ENCODE measurements at regions of chr17 and their contacts with region 1.

Region 1: DNA sequence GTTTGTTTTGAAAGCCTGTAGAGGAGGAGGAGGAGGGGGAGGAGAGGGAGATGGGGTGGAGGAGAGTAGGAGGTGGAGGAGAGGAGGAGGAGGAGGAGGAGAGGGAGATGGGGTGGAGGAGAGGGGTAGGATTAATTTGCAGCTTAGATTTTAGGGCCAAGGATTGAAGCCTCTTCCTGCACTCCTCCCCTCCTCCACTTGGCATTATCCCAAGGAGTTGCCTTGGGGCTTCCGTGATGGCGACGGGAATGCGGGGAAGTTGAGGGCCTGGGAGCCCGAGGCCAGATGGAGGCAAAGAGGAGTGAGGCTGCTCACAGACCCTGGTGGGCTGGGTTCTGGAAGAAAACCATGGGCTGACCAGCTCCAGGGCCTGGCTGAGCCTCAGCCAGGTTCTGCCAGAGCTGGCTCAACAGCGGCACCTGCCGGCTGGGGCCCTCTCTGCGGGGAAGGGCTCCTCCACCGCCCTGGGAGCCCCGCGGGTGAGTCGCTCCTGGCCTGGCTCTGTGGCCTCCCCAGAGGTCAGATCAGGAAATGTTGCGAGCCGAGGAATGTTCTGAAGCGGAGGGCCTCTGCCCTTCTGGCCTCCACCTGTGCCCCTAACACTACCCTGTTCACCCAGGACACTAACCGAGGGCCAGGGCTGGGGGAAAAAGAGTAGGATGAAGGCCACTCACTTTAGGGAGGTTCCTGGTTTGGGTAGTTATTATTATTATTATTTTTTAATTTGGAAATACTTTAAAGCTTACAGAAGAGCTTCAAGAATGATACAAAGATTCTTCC is 23.9 kb upstream of the FMNL1 start:
- DNase-seq: peak; percentile 81
- ATAC-seq: peak; percentile 96
- H3K4me3 ChIP-seq: no peak overlapping the region
- H3K27ac ChIP-seq: peak overlapping the region; percentile 53
- H3K4me1 ChIP-seq: peaks cover 12 to 31% of the 10 kb centered on the region in 2 experiments; a peak in 3 of 4 replicates
- H3K27me3 ChIP-seq: no peaks in the 10 kb centered on the region
- CTCF ChIP-seq: peak; percentile 98 to 99 (median 99)
- POLR2A ChIP-seq: no peak
- RAD21 ChIP-seq: peak; percentile 100

Region 2: DNA sequence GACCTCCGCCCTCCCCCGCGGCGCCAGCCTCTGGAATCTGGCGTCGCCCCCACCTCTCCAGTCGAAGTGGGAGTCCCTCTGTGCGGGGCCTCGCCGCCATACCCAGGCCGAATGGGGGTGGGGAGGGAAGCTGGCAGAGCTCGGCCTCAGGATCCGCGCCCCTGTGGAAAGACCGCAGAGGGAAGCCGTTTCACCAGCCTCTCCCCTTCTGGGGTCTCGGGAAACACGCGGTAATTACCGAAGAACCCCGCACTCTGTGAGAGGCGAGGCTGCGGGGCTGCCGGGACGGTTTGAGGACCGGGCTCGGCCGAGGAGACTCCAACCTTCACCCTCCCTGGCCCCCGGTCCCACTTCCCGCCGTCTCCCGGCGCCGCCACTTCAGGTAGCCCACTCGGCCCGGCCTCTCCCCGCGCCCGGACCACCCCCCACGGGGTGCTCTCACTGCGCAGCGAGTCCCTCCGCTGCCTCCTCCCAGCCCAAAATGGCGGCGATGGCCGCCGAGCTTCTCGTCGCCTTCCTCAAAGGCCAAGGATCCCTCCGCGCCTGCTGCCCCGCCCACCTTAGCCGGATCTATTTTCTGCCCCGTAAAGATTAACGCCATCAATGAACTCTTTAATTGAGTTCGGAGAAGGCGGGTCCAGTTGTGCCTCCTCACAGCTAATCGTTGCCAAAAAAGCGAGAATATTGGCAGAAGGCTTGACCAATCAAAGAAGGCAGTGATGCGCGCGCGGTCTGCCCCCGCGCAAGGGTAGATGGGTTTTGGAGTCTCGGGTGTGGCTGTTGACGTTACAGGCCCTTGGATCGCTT is 36.5 kb before region 1 on chr17:
- CTCF ChIA-PET with region 1: interaction called, 129 read pairs
- POLR2A ChIA-PET with region 1: interaction called, 14 read pairs
- RAD21 ChIA-PET with region 1: interaction called, 6 to 8 read pairs
- intact Hi-C with region 1: no loop called
- DNase-seq: peak; percentile 100
- ATAC-seq: peak; percentile 93
- H3K4me3 ChIP-seq: peak overlapping the region; percentile 89 to 97
- H3K27ac ChIP-seq: peak overlapping the region; percentile 89
- H3K4me1 ChIP-seq: peaks cover 23 to 35% of the 10 kb centered on the region in 2 experiments
- H3K27me3 ChIP-seq: no peaks in the 10 kb centered on the region
- CTCF ChIP-seq: 0 out of 6 replicates have a peak, but pooled peaks of 1 of the 3 experiments have one; percentile 9
- POLR2A ChIP-seq: peak; percentile 52
- RAD21 ChIP-seq: 0 out of 2 replicates have a peak, but pooled peaks have one; percentile 15

Region 3: DNA sequence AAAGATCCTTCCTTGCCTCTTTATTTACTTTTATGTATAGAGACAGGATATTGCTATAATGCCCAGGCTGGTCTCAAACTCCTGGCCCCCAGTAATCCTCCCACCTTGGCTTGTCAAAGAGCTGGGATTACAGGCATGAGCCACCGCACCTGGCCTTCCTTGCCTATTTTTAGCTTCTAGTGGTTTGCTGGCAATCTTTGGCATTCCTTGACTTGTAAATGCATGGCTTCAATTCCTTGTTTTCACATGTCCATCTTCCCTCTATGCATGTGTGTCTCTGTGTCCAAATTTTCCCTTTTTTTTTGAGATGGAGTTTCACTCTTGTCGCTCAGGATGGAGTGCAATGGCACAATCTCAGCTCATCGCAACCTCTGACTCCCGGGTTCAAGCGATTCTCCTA is 13.6 kb before region 1 on chr17:
- CTCF ChIA-PET with region 1: interaction called, 21 read pairs
- POLR2A ChIA-PET with region 1: no interaction called
- RAD21 ChIA-PET with region 1: no interaction called
- intact Hi-C with region 1: no loop called
- DNase-seq: no peak
- ATAC-seq: 0 out of 2 replicates have a peak, but pooled peaks have one; percentile 17
- H3K4me3 ChIP-seq: no peak overlapping the region
- H3K27ac ChIP-seq: 0 out of 2 replicates have a peak overlapping the region, but pooled peaks have one; percentile 35
- H3K4me1 ChIP-seq: peaks cover 16 to 18% of the 10 kb centered on the region in 2 experiments
- H3K27me3 ChIP-seq: no peaks in the 10 kb centered on the region
- CTCF ChIP-seq: no peak
- POLR2A ChIP-seq: no peak
- RAD21 ChIP-seq: no peak

Measured in HCT116 (cell line).